Sigmoid colon (tissue), 7 donors: ENCODE measurements at regions of chr18 and their contacts with region 1.

Region 1: DNA sequence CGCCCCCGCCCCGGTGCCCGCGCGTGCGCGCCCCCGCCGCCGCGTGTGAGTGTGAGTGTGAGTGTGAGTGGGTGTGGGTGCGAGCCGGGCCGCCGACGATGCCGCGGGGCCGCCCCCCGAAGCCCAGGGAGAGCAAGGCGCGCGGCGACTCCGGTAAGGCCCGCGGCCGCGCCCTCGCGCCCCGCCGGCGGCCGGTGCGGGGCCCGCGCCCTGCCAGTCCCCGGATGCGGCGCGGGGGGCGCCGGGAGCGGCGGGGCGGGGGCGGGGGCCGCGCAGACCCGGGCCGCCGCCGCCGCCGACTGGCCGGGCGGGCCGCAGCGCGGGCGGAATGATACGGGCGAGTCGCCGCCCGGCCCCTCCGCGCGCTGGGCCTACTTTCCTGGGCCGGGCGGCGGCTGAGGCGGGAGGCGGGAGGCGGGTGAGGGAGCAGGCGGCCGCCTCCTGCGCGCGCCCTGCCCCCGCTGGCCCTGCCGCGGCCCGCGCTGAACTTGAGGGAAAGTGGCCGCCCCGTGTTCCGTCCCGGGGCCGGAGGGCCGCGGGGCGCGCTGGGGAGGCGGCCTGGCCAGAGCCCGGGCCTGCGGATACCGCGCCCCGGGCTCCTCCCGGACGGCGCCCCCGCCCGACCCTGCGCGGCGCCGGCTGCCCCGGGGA is at the start of gene ZNF236:
- DNase-seq: peak; percentile 87
- H3K4me3 ChIP-seq: peak within 1 kb of the TSS; percentile 81 to 96 (median 94)
- H3K27ac ChIP-seq: peak within 1 kb of the TSS; percentile 96 to 100 (median 98)
- H3K4me1 ChIP-seq: peaks cover 0 to 45% (median 26%) of the 10 kb centered on the region in 4 donors
- H3K27me3 ChIP-seq: no peaks in the 10 kb centered on the region
- CTCF ChIP-seq: no peak
- EP300 ChIP-seq: no peak
- POLR2A ChIP-seq: no peak
- total RNA-seq, gene ZNF236: 18.9 to 26.6 (median 22.4) TPM

Region 2: DNA sequence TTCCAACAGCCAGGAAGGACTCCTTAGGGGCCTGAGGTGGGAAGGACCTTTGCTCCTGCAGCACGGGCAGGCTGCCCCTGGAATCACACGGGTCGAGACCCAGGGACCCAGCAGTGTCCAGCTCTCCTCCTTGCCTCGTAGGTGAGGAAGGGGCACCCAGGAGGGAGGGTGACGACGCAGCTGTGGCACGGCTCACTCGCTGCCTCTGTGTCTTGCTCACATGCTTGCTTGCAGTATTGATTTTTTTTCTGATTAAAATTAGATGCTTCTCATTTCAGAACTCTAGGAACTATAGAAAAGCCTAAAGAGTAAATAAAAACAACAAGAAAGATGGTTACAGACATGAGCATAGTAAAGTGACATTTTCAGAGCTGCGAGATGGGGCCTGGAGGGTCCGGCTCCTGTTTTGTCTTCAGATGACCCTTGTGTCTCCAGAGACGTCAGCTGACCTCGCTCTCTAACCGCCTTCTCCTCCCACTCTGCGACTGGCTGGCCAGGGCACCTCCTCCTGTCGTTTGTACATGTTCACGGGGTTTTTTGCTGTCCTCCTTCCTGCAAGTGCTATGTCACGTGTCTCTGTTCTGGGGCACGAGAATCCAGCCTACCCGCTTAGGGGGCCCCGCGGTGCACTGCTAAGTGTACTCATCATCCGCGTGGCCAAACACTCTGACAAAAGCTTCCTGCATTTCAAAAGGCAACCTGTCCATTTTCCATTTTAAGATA is 65.9 kb before region 1 on chr18:
- intact Hi-C with region 1: loop called (anchors 5 kb)
- DNase-seq: peak; percentile 93
- H3K4me3 ChIP-seq: peak overlapping the region in 1 of 4 donors; percentile 9
- H3K27ac ChIP-seq: peak overlapping the region; percentile 54 to 85 (median 77)
- H3K4me1 ChIP-seq: peaks cover 0 to 31% (median 24%) of the 10 kb centered on the region in 4 donors
- H3K27me3 ChIP-seq: no peaks in the 10 kb centered on the region
- CTCF ChIP-seq: no peak
- EP300 ChIP-seq: peak in 1 of 4 donors; percentile 86
- POLR2A ChIP-seq: no peak

Region 3: GRCh38 chr18:76803814-76804213 is 18.8 kb before region 1 on chr18:
- intact Hi-C with region 1: loop called (anchors 2 kb)
- DNase-seq: peak; percentile 77
- H3K4me3 ChIP-seq: no peak overlapping the region
- H3K27ac ChIP-seq: no peak overlapping the region
- H3K4me1 ChIP-seq: peaks cover 0 to 15% (median 13%) of the 10 kb centered on the region in 4 donors
- H3K27me3 ChIP-seq: peaks cover 0 to 4% (median 0%) of the 10 kb centered on the region in 3 donors
- CTCF ChIP-seq: peak; percentile 44 to 82 (median 71)
- EP300 ChIP-seq: no peak
- POLR2A ChIP-seq: no peak